Common myeloid progenitor, CD34-positive (primary cell): ENCODE measurements at regions of chr6 and their contacts with region 1.

Region 1: DNA sequence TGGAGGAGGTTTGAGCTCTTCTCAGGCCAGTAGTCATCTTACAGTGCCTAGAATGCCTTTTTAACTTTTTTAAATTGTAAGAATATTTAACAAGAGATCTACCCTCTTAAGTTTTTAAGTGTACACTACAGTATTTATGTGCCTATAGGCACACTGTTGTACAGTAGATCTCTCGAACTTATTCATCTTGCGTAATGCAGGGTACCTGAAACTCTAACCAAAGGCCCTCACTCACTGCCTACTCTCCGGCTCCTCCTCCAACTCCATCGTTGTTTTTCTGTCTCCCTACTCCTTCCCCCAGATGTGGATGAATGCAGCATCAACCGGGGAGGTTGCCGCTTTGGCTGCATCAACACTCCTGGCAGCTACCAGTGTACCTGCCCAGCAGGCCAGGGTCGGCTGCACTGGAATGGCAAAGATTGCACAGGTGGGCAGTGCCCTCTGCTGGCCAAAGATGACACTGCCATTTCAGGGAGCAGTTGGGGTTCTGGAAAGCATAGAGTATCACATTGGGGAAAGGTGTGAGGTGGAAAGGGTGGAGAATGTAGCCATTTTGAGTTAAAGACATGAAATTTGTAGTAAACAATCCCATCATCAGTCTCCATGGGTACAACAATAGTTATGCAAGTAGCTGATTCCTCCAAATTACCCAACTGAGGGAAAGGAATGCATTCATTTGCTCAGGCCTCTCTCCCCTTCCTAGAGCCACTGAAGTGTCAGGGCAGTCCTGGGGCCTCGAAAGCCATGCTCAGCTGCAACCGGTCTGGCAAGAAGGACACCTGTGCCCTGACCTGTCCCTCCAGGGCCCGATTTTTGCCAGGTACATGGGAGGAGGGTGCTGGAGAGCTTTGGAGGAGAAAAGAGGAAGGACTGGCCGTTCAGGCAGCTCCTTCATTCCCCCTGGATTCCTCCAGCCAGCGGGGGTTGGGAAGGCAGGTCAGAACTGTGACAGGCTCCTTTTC is 18.4 kb upstream of the ZNF76 start:
- DNase-seq: peak; percentile 61 to 73 (median 65)
- H3K4me3 ChIP-seq: no peak overlapping the region
- H3K27ac ChIP-seq: no peak overlapping the region
- H3K4me1 ChIP-seq: peaks cover 4 to 28% (median 25%) of the 10 kb centered on the region in 4 experiments
- H3K27me3 ChIP-seq: no peaks in the 10 kb centered on the region

Region 2: GRCh38 chr6:34979218-34979617 is 261.9 kb before region 1 on chr6:
- CTCF ChIA-PET with region 1: interaction called, 68 read pairs
- POLR2A ChIA-PET with region 1: no interaction called
- DNase-seq: no peak
- H3K4me3 ChIP-seq: no peak overlapping the region
- H3K27ac ChIP-seq: no peak overlapping the region
- H3K4me1 ChIP-seq: peaks cover 0 to 12% (median 6%) of the 10 kb centered on the region in 4 experiments
- H3K27me3 ChIP-seq: no peaks in the 10 kb centered on the region

Region 3: DNA sequence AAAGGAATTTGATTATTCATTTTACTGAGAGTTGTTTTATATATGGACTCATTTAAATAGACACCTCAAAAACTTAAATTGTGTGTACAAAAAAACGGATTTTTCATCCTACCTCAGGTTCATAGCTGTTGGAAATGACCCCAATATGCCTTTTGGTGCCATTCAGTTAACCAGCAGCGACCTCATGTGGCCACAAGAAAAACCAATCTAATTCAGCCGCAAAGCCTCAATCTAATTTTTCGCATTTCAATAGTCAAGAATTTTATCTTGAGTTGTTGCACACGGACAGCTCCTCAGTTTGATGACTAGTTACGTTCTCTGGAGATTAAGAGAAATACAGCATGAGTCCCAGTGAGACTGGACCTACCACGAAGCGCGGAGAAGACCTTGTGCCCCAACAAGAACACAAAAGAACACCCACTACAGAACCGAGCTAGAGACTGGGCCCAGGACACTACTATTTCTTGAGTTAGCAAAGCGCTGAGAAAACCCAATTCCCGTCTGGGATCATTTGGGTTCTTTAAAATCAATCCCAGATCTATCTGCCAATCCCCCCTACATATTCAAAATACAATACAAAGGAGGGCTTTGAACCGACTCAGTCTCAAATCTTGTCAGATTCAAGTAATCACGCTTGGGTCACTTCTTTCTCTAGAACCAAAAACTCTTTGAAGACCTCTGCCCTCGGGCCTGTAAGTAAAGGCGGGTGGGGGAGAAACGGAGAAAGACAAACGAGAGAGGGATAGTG is 101.0 kb before region 1 on chr6:
- CTCF ChIA-PET with region 1: interaction called, 90 read pairs
- POLR2A ChIA-PET with region 1: no interaction called
- DNase-seq: peak; percentile 81 to 88 (median 83)
- H3K4me3 ChIP-seq: no peak overlapping the region
- H3K27ac ChIP-seq: no peak overlapping the region
- H3K4me1 ChIP-seq: peaks cover 0 to 21% (median 13%) of the 10 kb centered on the region in 4 experiments
- H3K27me3 ChIP-seq: no peaks in the 10 kb centered on the region

Region 4: GRCh38 chr6:35152067-35152707 is 88.9 kb before region 1 on chr6:
- CTCF ChIA-PET with region 1: interaction called, 90 read pairs
- POLR2A ChIA-PET with region 1: no interaction called
- DNase-seq: peak in 2 of 3 donors; percentile 35 to 53
- H3K4me3 ChIP-seq: no peak overlapping the region
- H3K27ac ChIP-seq: no peak overlapping the region
- H3K4me1 ChIP-seq: no peaks in the 10 kb centered on the region
- H3K27me3 ChIP-seq: peaks cover 0 to 4% (median 0%) of the 10 kb centered on the region in 5 experiments

Region 5: DNA sequence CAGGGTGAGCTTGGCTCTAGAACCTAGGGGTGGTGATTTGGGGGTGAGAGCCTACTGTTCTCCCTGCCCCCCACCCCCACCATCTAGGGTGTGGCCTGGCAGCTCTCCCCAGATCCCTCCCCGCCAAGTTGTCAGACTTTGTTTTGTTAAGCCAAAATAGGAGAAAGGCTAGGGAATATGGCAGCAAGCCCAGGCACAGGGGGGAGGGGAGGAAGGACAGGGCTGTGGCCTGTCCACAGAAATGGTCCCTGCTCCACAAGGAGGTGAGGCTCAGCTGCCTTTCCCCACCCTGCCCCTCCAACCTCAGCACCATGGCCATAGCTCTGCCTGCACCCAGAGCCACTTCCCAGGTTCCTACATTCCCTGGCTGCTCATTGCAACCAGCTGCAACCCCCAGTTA is 10.2 kb before region 1 on chr6:
- CTCF ChIA-PET with region 1: interaction called, 44 read pairs
- POLR2A ChIA-PET with region 1: no interaction called
- DNase-seq: no peak
- H3K4me3 ChIP-seq: no peak overlapping the region
- H3K27ac ChIP-seq: no peak overlapping the region
- H3K4me1 ChIP-seq: no peaks in the 10 kb centered on the region
- H3K27me3 ChIP-seq: no peaks in the 10 kb centered on the region

Region 6: GRCh38 chr6:35297601-35298481 is 56.7 kb after region 1 on chr6 and contains the start of gene DEF6:
- CTCF ChIA-PET with region 1: no interaction called
- POLR2A ChIA-PET with region 1: no interaction called
- DNase-seq: peak; percentile 91 to 94 (median 94)
- H3K4me3 ChIP-seq: peak within 1 kb of the TSS; percentile 44 to 91 (median 78)
- H3K27ac ChIP-seq: peak within 1 kb of the TSS; percentile 85 to 94
- H3K4me1 ChIP-seq: peaks cover 37 to 61% (median 57%) of the 10 kb centered on the region in 4 experiments
- H3K27me3 ChIP-seq: no peaks in the 10 kb centered on the region